ENCODE measurements at regions of chr3 and their contacts with region 1.

Region 1: DNA sequence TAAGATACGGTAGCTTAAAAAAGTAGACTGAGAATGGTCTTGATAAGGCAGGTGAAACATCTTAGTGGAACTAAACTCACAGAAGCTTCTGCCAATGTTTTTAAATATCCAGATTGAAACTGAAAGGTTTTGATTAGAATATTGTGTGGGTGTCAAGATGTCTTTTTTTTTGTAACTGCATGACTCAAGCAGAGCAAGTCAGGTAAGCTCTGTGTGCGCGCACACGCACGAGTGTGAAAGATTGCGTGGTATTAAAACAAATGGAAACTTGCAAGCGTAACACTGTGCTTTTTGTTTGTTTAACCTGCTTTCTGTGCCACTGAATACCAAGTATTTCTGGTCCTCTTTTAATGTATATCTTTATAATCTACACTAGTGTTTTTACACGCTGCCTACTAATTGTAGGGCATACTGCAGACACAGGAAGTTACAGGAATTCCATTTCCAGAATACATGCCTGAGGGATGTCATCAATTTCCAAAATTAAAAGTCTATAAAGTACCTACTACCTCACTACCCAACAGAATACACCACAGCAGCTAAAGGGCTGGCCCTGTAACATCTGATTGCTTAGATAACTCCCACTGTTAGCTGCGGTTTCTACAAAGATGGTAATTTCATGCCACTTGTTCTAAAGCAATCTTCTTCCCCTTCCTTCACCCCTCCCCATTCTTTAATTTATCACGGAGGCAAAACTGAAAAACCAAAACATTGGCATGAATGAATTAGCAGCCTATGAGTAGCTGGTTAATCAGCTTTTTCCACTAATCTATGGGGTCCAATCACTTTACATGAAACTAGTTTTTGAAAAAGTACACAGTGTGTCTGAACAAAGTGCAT is 472.8 kb downstream of the SHQ1 start:
- DNase-seq: peak; percentile 68
- H3K4me3 Mint-ChIP-seq: peak overlapping the region; percentile 43
- H3K27ac Mint-ChIP-seq: peak overlapping the region; percentile 80
- H3K4me1 Mint-ChIP-seq: peaks cover 47% of the 10 kb centered on the region
- H3K27me3 Mint-ChIP-seq: no peaks in the 10 kb centered on the region

Region 2: GRCh38 chr3:72259755-72260587 is 115.5 kb before region 1 on chr3:
- intact Hi-C with region 1: loop called (anchors 2 kb)
- DNase-seq: no peak
- H3K4me3 Mint-ChIP-seq: no peak overlapping the region
- H3K27ac Mint-ChIP-seq: peak overlapping the region; percentile 56
- H3K4me1 Mint-ChIP-seq: peaks cover 25% of the 10 kb centered on the region
- H3K27me3 Mint-ChIP-seq: no peaks in the 10 kb centered on the region

Region 3: DNA sequence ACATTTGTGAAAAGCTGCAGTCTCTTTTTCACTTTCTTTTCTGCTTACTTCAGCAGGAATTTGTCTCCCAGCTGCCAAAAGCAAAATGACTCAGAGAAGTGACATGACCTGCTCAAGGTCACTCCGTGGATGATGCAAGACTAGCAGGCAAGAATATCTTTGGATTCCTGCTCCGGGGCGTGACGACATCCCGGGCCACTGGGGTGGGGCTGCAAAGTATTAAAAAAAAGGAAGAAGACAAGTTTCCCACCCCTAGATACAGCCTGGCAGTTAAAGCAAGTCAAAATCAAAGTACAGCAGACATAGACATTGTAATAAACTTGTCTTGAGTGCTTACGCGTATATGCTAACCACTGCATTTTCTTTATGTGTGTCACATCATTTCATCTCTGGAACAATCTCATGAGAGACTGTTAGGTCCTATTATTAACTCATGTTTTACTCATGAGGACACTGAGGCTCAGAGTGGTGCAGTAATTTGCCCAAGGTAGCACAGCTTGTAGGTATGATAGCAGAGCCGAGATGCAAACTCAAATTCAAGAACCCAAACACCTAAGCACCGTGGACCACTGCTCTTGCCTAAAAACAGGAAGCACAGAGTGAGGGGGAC is 105.3 kb before region 1 on chr3:
- intact Hi-C with region 1: loop called (anchors 1 kb)
- DNase-seq: peak; percentile 65
- H3K4me3 Mint-ChIP-seq: peak overlapping the region; percentile 12
- H3K27ac Mint-ChIP-seq: peak overlapping the region; percentile 67
- H3K4me1 Mint-ChIP-seq: peaks cover 57% of the 10 kb centered on the region
- H3K27me3 Mint-ChIP-seq: no peaks in the 10 kb centered on the region

Region 4: GRCh38 chr3:72359738-72360137 is 15.7 kb before region 1 on chr3:
- intact Hi-C with region 1: no loop called
- DNase-seq: no peak
- H3K4me3 Mint-ChIP-seq: no peak overlapping the region
- H3K27ac Mint-ChIP-seq: no peak overlapping the region
- H3K4me1 Mint-ChIP-seq: peaks cover 10% of the 10 kb centered on the region
- H3K27me3 Mint-ChIP-seq: peaks cover 5% of the 10 kb centered on the region

Region 5: DNA sequence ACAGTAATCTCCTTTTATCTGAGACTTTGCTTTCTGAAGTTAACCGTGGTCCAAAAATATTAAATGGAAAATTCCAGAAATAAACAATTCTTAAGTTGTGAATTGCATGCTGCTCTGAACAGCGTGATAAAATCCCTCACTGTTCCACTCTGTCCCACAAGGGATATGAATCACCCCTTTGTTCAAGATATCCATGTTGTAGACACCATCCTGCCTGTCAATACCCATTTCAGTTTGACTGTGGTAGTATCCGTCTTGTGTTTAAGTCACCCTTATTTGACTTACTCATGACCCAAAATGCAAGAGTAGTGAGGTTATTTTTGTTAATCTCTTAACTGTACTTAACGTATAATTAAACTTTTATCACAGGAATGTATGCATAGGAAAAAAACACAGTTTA is 37.8 kb after region 1 on chr3:
- intact Hi-C with region 1: loop called (anchors 5 kb)
- DNase-seq: no peak
- H3K4me3 Mint-ChIP-seq: no peak overlapping the region
- H3K27ac Mint-ChIP-seq: peak overlapping the region; percentile 18
- H3K4me1 Mint-ChIP-seq: peaks cover 55% of the 10 kb centered on the region
- H3K27me3 Mint-ChIP-seq: no peaks in the 10 kb centered on the region

Region 6: DNA sequence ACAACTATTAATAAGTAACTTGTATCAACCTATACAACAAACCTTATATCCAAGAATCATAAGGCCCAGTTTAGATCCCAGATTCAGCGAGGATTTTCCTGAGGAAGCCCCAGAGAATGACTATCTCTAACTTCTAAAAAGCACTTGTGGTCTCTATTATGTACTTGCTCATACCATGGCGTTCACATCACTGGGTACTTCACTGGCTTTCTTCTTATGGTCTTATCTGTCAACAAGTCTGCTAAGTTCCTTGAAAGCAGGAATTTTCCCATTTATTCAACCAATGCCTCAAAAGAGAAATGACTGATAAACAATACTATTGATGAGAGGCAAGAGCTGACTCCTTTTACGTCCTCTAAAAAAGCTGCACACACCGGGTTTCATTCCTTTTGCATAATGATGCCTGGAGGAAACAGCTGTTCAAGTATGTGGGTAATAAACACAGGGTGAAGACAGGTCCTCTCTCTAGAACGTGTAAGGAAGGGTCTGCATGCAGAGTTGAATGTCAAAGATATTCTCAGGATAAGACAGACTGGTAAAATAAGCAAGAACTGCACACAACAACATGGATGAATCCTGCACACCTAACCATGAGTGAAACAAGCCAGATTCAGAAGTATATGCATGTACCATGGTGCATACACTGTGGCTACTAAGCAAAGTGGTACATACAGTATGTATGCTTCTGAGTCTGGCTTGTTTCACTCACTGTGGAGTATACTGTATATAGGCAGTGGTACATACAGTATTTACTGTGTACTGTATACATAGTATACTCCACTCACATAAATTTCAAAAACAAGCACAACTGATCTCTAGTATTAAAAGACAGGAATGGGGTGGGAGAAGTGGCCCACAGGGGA is 64.1 kb after region 1 on chr3:
- intact Hi-C with region 1: loop called (anchors 5 kb)
- DNase-seq: peak; percentile 42
- H3K4me3 Mint-ChIP-seq: no peak overlapping the region
- H3K27ac Mint-ChIP-seq: no peak overlapping the region
- H3K4me1 Mint-ChIP-seq: peaks cover 75% of the 10 kb centered on the region
- H3K27me3 Mint-ChIP-seq: no peaks in the 10 kb centered on the region